Left colon (tissue), 2 donors: ENCODE measurements at regions of chr1 and their contacts with region 1.

Region 1: GRCh38 chr1:241611063-241611462 is 29.1 kb downstream of the CHML start:
- DNase-seq: no peak
- ATAC-seq: peak; percentile 63

Region 2: DNA sequence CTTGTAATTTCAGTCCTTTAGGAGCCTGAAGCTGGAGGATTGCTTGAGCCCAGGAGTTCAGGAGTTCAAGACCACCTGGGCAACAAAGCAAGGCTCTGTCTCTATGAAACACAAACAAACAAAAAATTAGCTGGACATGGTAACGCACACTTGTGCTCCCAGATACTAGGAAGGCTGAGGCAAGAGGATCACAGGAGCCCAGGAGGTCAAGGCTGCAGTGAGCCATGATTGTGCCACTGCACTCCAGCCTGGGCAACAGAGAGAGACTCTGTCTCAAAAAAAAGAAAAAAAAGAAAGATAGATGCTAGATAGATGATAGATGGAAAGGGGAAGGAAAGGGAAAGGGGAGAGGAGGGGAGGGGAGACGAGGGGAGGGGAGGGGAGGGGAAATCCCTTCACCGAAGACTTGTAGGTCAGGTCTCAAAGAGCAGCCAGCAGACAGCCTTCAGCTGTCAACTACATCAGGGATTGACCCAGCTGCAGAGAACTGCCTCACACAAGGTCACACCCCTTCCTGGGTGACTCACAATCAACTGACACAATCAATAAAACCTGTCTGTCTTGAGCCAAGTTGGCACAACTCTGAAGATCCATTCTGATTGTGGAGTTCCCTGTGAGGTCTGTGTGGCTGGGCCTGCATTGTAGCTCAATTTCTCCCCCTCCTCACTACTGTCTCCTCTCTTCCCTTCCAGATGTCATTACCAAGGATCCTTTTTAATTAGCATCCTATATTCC is 454.7 kb before region 1 on chr1:
- intact Hi-C with region 1: no loop called
- DNase-seq: peak; percentile 37 to 82
- ATAC-seq: peak; percentile 100

Region 3: GRCh38 chr1:241834733-241835377 is 223.8 kb after region 1 on chr1:
- intact Hi-C with region 1: loop called in 1 of 2 experiments (anchors 5 kb)
- DNase-seq: no peak
- ATAC-seq: no peak

Region 4: DNA sequence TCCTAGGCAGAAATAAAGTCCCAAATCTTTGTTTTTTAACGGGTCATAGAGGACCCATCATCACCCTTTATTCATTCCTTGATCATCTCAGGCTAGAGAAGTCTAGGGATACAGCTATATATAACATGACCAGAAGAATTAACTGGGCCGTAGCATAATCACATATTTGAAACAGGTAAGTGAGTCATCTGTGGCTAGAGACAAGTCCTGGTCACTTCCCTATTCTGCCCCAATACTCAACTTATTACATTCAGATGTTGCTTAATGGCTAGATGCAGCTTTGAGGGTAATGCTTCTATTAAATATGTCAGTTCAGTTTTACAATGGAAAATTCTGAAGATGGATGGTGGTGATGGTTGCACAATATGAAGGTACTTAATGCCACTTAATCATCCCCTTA is 283.9 kb after region 1 on chr1:
- intact Hi-C with region 1: no loop called
- DNase-seq: no peak
- ATAC-seq: no peak